Activated CD4-positive, alpha-beta T cell treated with anti-CD3 and anti-CD28 coated beads for 36 hours (primary cell): ENCODE measurements at regions of chr20 and their contacts with region 1.

Region 1: GRCh38 chr20:17995967-17996819 is 27.4 kb downstream of the MGME1 start:
- DNase-seq: peak; percentile 56
- ATAC-seq: peak; percentile 60
- H3K4me3 Mint-ChIP-seq: no peak overlapping the region
- H3K27ac Mint-ChIP-seq: no peak overlapping the region
- H3K4me1 Mint-ChIP-seq: peaks cover 27% of the 10 kb centered on the region
- H3K27me3 Mint-ChIP-seq: no peaks in the 10 kb centered on the region

Region 2: GRCh38 chr20:17504898-17505635 is 491.1 kb before region 1 on chr20:
- CTCF ChIA-PET with region 1: interaction called, 3 read pairs
- POLR2A ChIA-PET with region 1: interaction called, 7 read pairs
- intact Hi-C with region 1: loop called (anchors 1 kb)
- DNase-seq: peak; percentile 53
- ATAC-seq: peak; percentile 68
- H3K4me3 Mint-ChIP-seq: peak overlapping the region; percentile 70
- H3K27ac Mint-ChIP-seq: peak overlapping the region; percentile 80
- H3K4me1 Mint-ChIP-seq: peaks cover 27% of the 10 kb centered on the region
- H3K27me3 Mint-ChIP-seq: no peaks in the 10 kb centered on the region

Region 3: DNA sequence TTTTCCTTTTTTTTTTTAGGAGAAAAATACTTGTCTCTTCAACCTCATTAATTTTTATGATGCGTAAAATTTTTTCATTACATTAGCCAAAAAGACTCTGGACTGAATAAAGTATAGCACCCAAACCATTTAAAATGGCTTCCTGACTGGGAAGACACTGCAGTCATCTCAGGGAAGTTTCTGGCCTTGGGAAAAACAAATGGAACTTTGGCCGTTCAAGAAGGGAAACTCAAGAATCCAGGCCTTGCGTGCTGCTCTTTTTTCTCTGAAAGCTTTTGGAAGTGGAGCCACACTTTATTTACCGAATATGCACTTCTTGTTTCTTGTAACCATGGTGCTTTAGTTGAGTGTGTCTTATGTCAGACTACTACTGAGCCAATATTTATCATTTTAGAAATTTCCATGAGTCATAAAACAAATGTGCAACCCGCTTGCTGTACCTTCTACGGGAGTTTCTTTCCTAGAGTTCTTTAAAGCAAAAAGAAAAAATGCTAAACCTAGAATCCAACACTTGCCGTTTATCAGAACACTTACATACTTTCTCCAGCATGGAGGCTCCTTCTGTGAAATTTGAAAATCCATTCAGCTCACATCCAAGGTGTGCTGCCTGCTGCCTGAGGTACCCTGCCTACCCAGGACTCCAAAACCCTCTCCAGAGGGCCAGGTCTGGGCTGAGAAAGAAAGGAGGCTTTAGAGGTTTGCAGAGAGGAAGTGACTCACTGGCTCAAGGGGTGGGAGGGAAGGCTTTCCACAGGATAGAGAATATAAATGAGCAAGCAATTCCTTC is 437.8 kb before region 1 on chr20:
- CTCF ChIA-PET with region 1: no interaction called
- POLR2A ChIA-PET with region 1: no interaction called
- intact Hi-C with region 1: loop called in 1 of 2 experiments (anchors 1 kb)
- DNase-seq: peak; percentile 57
- ATAC-seq: peak; percentile 81
- H3K4me3 Mint-ChIP-seq: no peak overlapping the region
- H3K27ac Mint-ChIP-seq: peak overlapping the region; percentile 71
- H3K4me1 Mint-ChIP-seq: peaks cover 41% of the 10 kb centered on the region
- H3K27me3 Mint-ChIP-seq: no peaks in the 10 kb centered on the region

Region 4: DNA sequence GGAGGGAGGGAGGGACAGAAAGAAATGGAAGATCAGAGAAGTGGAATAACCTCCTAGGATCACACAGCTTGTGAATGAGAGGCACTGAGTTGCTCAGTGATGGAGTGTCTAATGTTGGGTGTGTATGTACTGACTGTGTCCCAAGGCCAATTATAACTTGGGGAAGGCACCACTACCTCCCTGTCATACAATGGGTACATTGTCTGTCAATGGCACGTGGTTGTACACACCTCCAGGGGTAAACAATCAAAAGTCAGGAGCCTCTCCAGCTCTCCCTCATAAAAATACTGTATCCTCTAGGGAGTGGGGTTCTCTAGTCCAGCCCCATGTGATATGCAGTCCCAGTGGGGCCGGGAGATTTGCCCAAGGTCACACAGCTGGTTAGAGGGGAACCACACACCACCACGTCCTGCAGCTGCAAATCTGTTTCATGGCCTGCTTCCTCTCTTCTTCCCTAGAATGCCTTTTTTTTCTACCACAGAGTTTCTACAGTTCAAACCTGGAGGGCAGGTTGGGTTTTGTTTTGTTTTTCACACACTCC is 140.1 kb before region 1 on chr20:
- CTCF ChIA-PET with region 1: no interaction called
- POLR2A ChIA-PET with region 1: no interaction called
- intact Hi-C with region 1: loop called in 1 of 2 experiments (anchors 1 kb)
- DNase-seq: peak; percentile 51
- ATAC-seq: peak; percentile 59
- H3K4me3 Mint-ChIP-seq: no peak overlapping the region
- H3K27ac Mint-ChIP-seq: no peak overlapping the region
- H3K4me1 Mint-ChIP-seq: peaks cover 40% of the 10 kb centered on the region
- H3K27me3 Mint-ChIP-seq: peaks cover 2% of the 10 kb centered on the region

Region 5: GRCh38 chr20:17958373-17959256 is 37.6 kb before region 1 on chr20:
- CTCF ChIA-PET with region 1: interaction called, 3 read pairs
- POLR2A ChIA-PET with region 1: no interaction called
- intact Hi-C with region 1: loop called (anchors 1 to 5 kb)
- DNase-seq: no peak
- ATAC-seq: no peak
- H3K4me3 Mint-ChIP-seq: no peak overlapping the region
- H3K27ac Mint-ChIP-seq: peak overlapping the region; percentile 78
- H3K4me1 Mint-ChIP-seq: peaks cover 78% of the 10 kb centered on the region
- H3K27me3 Mint-ChIP-seq: no peaks in the 10 kb centered on the region

Region 6: GRCh38 chr20:18137412-18138265 is 141.4 kb after region 1 on chr20 and contains the starts of genes KAT14 and PET117:
- CTCF ChIA-PET with region 1: no interaction called
- POLR2A ChIA-PET with region 1: no interaction called
- intact Hi-C with region 1: loop called in 1 of 2 experiments (anchors 5 kb)
- DNase-seq: peak; percentile 94
- ATAC-seq: peak; percentile 91
- H3K4me3 Mint-ChIP-seq: peak within 1 kb of the TSS; percentile 74
- H3K27ac Mint-ChIP-seq: peak within 1 kb of the TSS; percentile 89
- H3K4me1 Mint-ChIP-seq: peaks cover 32% of the 10 kb centered on the region
- H3K27me3 Mint-ChIP-seq: peaks cover 1% of the 10 kb centered on the region
- total RNA-seq, gene KAT14: 17.2 to 17.9 TPM
- total RNA-seq, gene PET117: 12.0 to 18.7 TPM